Activated naive CD4-positive, alpha-beta T cell treated with anti-CD3 and anti-CD28 coated beads for 36 hours (primary cell): ENCODE measurements at regions of chr11 and their contacts with region 1.

Region 1: GRCh38 chr11:73184953-73185671 is 33.0 kb upstream of the P2RY2 start:
- DNase-seq: peak; percentile 72
- H3K4me3 Mint-ChIP-seq: no peak overlapping the region
- H3K27ac Mint-ChIP-seq: no peak overlapping the region
- H3K4me1 Mint-ChIP-seq: peaks cover 5% of the 10 kb centered on the region
- H3K27me3 Mint-ChIP-seq: peaks cover 5% of the 10 kb centered on the region

Region 2: GRCh38 chr11:73236854-73237253 is 51.7 kb after region 1 on chr11:
- CTCF ChIA-PET with region 1: interaction called, 9 read pairs
- intact Hi-C with region 1: loop called (anchors 1 kb)
- DNase-seq: peak; percentile 70
- H3K4me3 Mint-ChIP-seq: no peak overlapping the region
- H3K27ac Mint-ChIP-seq: no peak overlapping the region
- H3K4me1 Mint-ChIP-seq: no peaks in the 10 kb centered on the region
- H3K27me3 Mint-ChIP-seq: no peaks in the 10 kb centered on the region

Region 3: GRCh38 chr11:73242251-73243079 is 57.4 kb after region 1 on chr11:
- CTCF ChIA-PET with region 1: interaction called, 9 read pairs
- intact Hi-C with region 1: loop called (anchors 1 kb)
- DNase-seq: peak; percentile 80
- H3K4me3 Mint-ChIP-seq: no peak overlapping the region
- H3K27ac Mint-ChIP-seq: no peak overlapping the region
- H3K4me1 Mint-ChIP-seq: peaks cover 2% of the 10 kb centered on the region
- H3K27me3 Mint-ChIP-seq: no peaks in the 10 kb centered on the region

Region 4: DNA sequence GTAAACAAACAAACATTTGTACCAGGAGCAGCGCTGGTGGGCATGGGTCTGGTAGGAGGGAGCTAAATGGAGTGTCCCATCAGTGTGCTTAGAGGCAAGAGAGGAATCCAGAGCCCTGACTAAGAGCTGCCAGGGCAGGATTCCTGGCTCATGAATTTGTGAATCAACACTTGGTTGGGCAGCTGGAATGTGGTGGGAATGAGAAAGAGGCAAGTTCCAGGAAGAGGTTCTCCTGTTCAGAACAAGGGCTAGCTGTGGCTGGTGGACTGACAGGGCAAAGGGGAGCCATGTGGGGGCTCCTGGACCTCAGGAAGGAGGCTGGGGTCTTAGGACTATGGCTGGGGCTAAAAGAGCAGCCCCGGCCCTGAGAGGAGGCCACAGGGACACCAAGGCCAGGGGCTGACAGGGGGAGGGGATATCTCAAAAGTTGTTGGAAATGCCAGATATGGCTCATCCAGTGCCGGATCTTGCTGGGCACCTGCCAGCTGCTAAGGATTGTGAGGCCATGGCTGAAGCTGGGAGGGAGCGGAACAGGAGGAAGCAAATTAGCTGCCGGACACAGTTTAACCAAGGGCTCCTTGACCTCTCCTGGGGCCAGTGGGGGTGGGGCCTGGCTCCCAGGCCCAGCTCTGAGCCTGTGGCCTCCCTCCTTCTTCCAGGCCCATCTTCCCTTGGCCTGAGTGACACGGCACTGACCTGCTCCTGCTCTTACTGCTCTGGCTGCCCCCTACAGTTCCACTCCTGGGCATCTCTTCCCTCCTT is 72.4 kb after region 1 on chr11:
- CTCF ChIA-PET with region 1: no interaction called
- intact Hi-C with region 1: no loop called
- DNase-seq: no peak
- H3K4me3 Mint-ChIP-seq: no peak overlapping the region
- H3K27ac Mint-ChIP-seq: no peak overlapping the region
- H3K4me1 Mint-ChIP-seq: no peaks in the 10 kb centered on the region
- H3K27me3 Mint-ChIP-seq: peaks cover 3% of the 10 kb centered on the region

Region 5: DNA sequence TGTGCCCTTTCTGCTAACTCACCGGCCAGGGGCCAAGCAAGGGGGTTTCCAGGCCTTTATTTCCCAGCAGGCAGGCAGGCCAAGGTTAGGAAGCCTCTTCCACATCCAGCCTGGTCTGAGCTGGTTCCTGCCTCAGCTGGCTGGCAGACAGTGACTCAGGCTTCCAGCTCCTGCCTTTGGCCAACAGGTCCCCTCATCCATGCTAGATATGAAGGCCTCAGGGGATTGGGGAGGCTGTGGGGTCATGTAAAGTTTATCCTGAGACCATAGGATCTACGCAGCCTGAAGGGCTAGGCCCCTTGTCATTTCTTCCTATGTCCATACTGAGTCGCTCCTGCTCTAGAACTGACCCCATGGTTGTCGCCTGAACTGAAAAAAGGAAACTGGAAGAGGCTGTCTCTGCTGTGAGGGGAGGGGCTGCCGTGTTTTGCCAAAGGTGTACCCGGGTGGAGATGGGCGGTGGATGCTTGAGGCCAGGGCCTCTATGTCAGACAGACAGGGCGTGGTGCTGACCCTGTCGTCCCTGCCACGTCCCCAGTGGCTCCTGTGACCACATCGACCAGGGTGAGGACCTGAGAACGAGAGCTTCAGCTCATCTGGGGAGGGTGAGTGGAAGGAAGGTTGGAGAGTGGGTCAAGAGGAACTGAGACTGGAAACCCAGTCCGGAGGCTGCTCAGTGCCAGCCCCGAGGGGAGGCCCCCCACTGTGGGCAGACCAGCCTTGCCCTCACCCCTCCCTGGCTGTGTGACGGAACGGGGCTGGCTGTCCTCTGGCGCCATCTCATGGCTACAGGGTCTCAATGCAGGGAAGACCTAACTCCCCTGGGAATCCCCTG is 104.0 kb after region 1 on chr11:
- CTCF ChIA-PET with region 1: interaction called, 8 read pairs
- intact Hi-C with region 1: loop called (anchors 1 kb)
- DNase-seq: peak; percentile 76
- H3K4me3 Mint-ChIP-seq: no peak overlapping the region
- H3K27ac Mint-ChIP-seq: no peak overlapping the region
- H3K4me1 Mint-ChIP-seq: peaks cover 12% of the 10 kb centered on the region
- H3K27me3 Mint-ChIP-seq: no peaks in the 10 kb centered on the region